ENCODE measurements at regions of chr6 and their contacts with region 1.

Region 1: GRCh38 chr6:134352786-134353480 is 35.0 kb upstream of the SGK1 start:
- DNase-seq: no peak
- H3K4me3 Mint-ChIP-seq: no peak overlapping the region
- H3K27ac Mint-ChIP-seq: no peak overlapping the region
- H3K4me1 Mint-ChIP-seq: peaks cover 28% of the 10 kb centered on the region
- H3K27me3 Mint-ChIP-seq: no peaks in the 10 kb centered on the region

Region 2: DNA sequence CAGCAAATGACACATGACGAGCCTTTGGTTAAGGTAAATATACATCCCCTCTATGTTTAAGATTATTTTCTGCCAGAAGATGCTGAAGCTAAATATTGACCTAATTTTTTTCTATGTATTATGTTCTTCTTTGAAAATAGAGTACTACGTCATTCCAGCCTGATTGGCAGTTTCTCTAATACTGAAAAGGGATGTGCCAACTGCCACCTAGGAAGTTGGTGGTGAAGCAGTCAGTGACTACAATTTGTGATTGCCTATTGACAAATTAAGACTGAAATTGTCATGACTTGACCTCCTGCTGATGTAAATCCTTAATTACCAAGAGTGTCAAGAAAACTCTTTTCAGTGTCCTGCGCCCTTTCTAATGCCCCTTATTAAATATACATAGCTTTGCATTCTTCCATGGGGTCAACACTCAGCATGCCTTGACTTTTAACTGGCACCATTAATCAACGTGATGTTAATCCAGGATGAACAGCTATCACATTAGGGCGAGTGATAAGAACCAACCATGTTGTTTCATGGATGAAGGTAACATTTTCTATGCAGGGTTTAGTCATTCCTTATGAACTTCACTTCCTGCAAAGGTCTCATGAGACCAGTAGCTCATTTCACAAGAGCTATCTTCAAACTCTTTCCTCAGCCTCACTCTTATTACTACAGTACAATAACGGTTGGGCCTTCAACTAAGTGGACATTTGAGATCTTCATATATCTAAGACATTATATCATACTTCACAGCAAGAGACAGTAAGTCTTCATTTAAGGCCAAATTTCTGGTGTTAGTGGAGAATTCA is 12.6 kb before region 1 on chr6:
- CTCF ChIA-PET with region 1: interaction called, 10 read pairs
- POLR2A ChIA-PET with region 1: no interaction called
- DNase-seq: no peak
- H3K4me3 Mint-ChIP-seq: no peak overlapping the region
- H3K27ac Mint-ChIP-seq: no peak overlapping the region
- H3K4me1 Mint-ChIP-seq: peaks cover 2% of the 10 kb centered on the region
- H3K27me3 Mint-ChIP-seq: no peaks in the 10 kb centered on the region

Region 3: DNA sequence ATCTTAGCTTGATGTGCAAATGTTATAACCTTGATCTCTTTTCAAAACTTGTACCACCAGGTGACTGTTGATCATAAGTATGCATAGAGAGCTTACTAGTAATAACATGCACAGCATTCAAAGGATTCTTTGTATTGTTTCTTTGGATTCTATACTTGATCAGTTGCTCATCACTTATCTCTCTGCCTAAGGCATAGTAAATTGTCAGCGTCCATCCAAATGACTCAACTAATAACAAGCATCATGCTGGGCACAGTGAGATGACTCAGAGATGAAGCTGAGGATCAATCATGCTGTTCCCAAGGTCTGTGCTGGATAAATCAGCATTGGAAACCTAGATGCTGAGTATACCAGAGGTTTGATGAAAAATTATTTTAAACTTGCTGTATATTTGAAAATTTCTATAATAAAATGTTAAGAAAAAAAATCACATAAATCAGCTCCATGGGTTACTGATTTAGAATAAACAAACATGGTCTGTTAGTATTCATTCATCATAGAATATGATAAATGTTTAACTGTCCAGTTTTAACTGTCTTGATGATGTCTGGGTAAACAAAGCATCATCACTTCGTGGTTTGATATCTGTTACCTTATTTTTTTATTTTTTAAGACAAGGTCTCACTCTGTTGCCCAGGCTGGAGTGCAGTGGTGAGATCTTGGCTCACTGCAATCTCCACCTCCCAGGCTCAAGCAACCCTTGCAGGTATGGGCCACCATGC is 10.5 kb after region 1 on chr6:
- CTCF ChIA-PET with region 1: interaction called, 21 read pairs
- POLR2A ChIA-PET with region 1: no interaction called
- DNase-seq: no peak
- H3K4me3 Mint-ChIP-seq: no peak overlapping the region
- H3K27ac Mint-ChIP-seq: no peak overlapping the region
- H3K4me1 Mint-ChIP-seq: no peaks in the 10 kb centered on the region
- H3K27me3 Mint-ChIP-seq: no peaks in the 10 kb centered on the region

Region 4: DNA sequence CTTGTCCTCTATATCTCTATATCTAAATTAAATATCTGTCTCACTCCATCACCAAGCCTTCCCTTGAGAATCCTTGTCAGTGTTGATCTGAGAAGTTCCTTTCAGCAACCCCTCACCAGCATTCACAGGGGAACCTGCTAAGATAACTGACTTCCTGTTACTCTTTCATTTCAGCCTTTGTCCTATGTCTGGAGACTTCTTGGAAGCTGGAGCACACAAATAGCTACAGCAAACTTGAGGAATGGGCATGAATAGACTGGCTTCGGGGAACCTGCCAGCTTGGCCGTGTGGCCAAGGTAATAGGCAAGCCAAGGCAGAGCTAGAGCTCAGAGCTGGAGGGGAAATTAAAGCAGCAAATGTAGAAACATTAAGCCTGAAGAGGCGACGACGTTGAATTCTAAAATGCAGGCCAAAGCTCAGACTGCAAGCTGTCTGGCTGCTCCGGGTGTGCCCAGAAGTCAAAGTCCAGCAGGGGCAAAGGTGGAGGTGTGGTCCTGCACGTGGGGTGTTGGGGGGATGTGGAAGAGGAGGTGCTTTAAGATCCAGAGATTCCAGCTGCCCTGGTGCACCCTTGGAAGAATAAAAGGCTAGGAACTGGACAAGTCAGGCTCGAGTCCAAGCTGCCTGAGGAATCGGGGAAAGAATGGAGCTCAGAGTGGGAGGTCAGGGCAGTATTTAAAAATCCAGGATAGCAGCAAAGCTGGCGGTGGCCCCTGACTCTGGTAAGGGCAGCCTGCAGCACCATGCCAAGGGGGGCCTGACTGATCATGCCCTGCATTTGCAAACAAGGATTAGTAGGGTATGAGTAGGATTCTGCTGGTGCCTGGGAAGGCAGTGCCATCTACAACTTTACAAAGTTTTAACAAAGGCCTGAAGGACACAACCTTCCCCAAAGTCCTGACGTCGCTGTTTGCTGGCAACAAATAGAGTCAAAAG is 149.9 kb after region 1 on chr6:
- CTCF ChIA-PET with region 1: no interaction called
- POLR2A ChIA-PET with region 1: no interaction called
- DNase-seq: no peak
- H3K4me3 Mint-ChIP-seq: no peak overlapping the region
- H3K27ac Mint-ChIP-seq: no peak overlapping the region
- H3K4me1 Mint-ChIP-seq: peaks cover 3% of the 10 kb centered on the region
- H3K27me3 Mint-ChIP-seq: peaks cover 2% of the 10 kb centered on the region

Measured in activated CD4-positive, alpha-beta T cell treated with anti-CD3 and anti-CD28 coated beads, Interleukin-2, amount 10 ng/mL, durations not matched to agents 7 days and 5 days (primary cell).